ENCODE measurements at regions of chrX and their contacts with region 1.

Region 1: DNA sequence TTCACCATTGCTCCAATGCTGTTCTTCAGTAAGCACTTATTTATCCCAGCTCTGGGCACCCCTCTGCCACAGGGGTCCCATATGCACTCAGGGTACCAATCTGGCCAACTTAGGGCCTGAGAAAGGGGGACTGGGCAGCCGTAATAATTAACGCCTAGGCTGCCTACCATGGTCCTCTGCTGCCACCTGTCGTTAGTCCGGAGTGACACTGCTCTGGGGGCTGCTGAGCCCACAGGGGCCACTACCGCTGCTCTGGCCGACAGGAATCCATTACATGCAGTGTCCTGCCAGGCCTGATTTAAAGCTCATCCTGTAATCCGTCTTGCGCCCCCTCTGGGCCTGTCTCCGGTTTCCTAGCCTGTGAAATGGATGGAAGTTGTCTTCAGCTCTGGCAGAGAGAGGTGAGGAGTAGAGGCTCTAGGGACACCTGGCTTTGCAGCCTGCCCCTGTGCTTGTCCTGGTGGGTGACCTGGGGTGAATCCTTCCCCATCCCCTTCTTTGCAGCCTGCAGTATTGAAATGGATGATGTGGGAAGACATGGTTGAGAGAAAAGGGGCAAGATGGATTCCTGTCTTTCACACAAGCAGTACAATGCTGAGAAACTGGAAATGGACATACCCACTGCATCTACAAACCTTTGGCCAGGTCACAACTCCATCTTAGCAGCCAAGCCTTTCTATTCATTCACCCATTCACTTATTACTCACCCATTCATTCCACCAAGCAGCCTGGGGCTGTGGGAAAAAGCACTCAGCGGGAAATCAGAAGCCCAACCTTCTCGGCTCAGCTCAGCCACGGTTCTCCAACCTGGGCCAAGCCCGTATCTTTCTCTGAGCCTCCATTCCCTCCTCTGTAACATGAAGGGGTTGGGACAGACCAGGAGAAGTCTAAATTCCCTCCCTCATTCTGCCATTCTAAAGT is 116.3 kb upstream of the NALF2 start:
- DNase-seq: peak; percentile 39
- H3K4me3 Mint-ChIP-seq: no peak overlapping the region
- H3K27ac Mint-ChIP-seq: no peak overlapping the region
- H3K4me1 Mint-ChIP-seq: no peaks in the 10 kb centered on the region
- H3K27me3 Mint-ChIP-seq: no peaks in the 10 kb centered on the region

Region 2: DNA sequence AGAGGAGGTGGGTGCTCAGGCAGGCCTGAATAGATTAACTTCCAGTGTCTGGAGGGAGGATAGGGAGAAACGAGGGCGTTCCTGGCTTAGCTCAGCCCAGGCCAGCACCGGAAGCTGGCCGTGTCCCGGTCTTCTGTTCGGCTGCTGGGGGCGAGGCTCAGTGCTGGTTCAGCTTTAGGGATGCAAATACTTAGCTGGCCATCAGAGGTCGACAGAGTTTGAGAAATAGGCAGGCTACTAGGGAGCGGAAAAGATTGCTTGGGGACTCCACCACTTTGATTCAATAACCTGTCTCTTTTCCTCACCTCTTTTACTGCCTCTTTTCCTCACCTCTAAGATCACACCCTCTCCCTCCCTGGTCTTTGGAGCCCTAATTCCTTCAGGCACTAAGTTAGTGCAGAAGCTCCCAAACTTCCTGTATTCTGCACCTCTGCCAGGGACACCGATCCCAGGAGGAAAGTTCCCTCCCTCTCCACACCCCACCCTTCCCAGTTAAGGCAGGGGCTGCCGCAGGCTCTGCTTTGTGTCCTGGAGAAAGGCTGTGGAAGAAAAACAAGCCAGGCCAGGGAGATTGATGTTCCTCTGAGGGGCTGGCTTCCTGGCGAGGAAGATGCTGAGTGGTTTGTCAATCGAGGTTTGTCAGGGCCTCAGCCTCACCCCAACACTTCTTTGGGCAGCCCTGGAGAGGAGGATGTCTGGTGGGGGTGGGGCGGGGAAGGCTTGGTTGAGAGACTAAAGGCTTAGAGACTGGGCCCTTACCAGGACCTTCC is 565.0 kb before region 1 on chrX:
- CTCF ChIA-PET with region 1: interaction called, 7 read pairs
- intact Hi-C with region 1: loop called (anchors 1 kb)
- DNase-seq: peak; percentile 30
- H3K4me3 Mint-ChIP-seq: no peak overlapping the region
- H3K27ac Mint-ChIP-seq: no peak overlapping the region
- H3K4me1 Mint-ChIP-seq: peaks cover 5% of the 10 kb centered on the region
- H3K27me3 Mint-ChIP-seq: peaks cover 1% of the 10 kb centered on the region

Region 3: GRCh38 chrX:69362856-69363255 is 25.0 kb before region 1 on chrX:
- CTCF ChIA-PET with region 1: no interaction called
- intact Hi-C with region 1: no loop called
- DNase-seq: no peak
- H3K4me3 Mint-ChIP-seq: no peak overlapping the region
- H3K27ac Mint-ChIP-seq: no peak overlapping the region
- H3K4me1 Mint-ChIP-seq: no peaks in the 10 kb centered on the region
- H3K27me3 Mint-ChIP-seq: no peaks in the 10 kb centered on the region

Measured in activated naive CD4-positive, alpha-beta T cell treated with anti-CD3 and anti-CD28 coated beads for 36 hours (primary cell).